A549 (cell line): ENCODE measurements at regions of chr12 and their contacts with region 1.

Region 1: DNA sequence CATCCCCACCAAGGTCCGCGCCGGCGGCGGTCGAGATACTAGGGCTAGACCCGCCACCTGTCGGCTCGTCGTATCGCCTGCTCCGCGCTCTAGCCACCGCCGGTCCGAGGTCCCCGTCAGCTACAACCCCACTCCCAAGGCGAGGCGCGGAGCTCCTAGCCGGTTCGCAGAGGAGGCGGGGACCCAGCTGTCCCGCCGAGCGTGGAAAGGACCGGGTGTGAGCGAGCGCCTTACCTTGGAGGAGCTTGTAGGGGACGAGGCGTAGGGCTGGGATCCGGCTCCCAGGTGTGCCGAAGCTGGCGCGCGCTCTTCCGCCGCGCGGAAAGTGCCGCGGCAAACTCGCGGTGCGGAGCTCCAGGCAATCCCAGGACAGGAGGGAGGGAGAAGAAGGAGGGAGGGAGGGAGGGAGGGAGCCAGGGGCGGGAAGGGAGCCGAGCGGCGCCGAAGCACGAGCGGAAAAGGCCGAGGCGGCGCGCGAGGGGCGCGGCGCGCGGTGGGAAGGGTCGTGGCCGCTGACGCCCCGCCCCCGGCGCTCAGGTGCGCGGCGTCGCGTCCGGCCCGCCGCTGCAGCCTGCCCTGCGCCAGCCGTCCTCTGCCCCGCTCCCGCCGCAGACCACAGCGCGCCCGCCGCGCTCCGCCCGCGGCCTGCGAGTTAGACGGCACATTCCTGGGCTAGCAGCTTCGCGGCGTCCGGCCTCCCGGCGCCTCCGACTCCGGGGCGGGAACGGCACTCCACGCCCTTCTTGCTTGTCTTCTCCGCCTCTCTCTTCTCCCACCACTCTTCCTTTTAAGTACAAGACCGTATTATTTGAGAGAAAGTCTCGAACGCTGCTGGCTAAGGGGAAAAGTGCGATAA is at the start of gene PAWR:
- DNase-seq: peak; percentile 59 to 89
- ATAC-seq: peak; percentile 68 to 76
- H3K4me3 ChIP-seq: peak within 1 kb of the TSS; percentile 88
- H3K27ac ChIP-seq: peak within 1 kb of the TSS; percentile 93 to 98
- H3K4me1 ChIP-seq: peaks cover 35% of the 10 kb centered on the region
- CTCF ChIP-seq: peak; percentile 34; the same call in 1 of the 3 replicates
- EP300 ChIP-seq: peak in 1 of 2 experiments; percentile 6; a peak in 1 of 5 replicates
- POLR2A ChIP-seq: peak; percentile 75
- RAD21 ChIP-seq: peak; percentile 47 to 64; a peak in 4 of 5 replicates
- polyA plus RNA-seq, gene PAWR: 34.0 and 55.2 TPM in 2 replicates

Region 2: DNA sequence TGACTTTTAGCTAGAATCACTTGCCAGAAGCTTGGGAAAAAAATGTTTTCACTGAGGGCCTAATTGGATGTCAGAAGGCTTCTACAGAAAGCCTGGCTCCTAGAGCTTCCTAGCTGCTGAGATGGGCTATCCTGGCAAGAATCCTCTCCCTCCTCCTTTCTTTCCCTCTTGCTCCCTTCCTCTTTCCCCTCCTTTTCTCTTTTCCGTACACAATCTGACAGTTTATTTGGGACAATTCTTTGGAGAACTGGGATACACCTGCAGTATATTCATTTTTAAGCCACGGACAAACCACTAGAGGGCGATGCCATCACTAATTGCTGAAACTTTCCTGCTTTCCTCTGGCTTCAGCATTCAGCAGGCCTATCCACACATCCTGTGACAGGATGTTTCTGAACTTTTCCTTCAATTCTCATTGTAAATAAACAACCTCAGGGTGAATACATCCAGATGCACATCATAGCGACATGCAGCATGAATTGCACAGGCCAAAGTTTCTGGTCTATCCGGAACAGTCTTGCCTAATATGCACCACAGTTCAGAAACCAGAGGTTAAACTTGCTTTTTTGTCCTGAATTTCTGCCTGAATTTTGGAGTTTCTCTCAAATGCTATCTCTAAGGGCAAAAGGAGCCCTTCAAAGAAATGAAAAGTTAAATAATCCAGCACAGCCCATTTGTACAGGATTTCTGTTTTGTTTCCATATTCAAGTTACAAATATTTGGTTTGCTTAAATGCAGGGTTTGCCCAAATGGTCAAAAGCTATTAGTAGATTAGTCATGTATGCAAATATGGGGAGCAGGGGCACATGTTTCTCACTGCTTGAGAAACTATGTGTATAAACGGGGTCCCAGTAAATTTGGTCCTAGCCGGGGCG is 142.9 kb before region 1 on chr12:
- CTCF ChIA-PET with region 1: interaction called, 6 read pairs
- POLR2A ChIA-PET with region 1: interaction called, 13 read pairs
- DNase-seq: peak; percentile 66 to 84
- ATAC-seq: peak; percentile 75; a peak in 5 of 6 replicates
- H3K4me3 ChIP-seq: 0 out of 3 replicates have a peak overlapping the region, but pooled peaks have one; percentile 10
- H3K27ac ChIP-seq: peak overlapping the region; percentile 83 to 88
- H3K4me1 ChIP-seq: peaks cover 56% of the 10 kb centered on the region
- CTCF ChIP-seq: peak; percentile 82
- EP300 ChIP-seq: no peak
- POLR2A ChIP-seq: no peak
- RAD21 ChIP-seq: peak; percentile 72 to 73

Region 3: DNA sequence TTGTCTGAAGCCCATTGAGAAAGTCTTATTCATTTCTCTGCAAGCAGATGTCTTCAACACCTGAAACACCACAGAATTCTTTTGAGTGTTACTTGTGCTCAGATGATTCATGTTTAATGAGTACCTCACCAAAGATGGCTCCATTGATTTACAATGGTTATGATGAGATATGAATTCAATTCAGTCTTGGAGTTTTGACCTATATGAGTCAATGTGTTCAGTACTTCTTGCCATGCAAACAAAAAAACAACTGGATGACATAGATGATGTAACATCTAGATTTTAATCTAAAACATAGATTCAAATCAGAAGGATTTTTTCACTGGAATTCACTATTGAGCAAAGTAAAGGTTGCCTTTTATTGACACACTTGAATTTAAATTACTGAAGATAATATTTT is 15.3 kb after region 1 on chr12:
- CTCF ChIA-PET with region 1: interaction called, 3 read pairs
- POLR2A ChIA-PET with region 1: interaction called, 16 read pairs
- DNase-seq: no peak
- ATAC-seq: no peak
- H3K4me3 ChIP-seq: no peak overlapping the region
- H3K27ac ChIP-seq: no peak overlapping the region
- H3K4me1 ChIP-seq: no peaks in the 10 kb centered on the region
- CTCF ChIP-seq: no peak
- EP300 ChIP-seq: no peak
- POLR2A ChIP-seq: no peak
- RAD21 ChIP-seq: no peak

Region 4: DNA sequence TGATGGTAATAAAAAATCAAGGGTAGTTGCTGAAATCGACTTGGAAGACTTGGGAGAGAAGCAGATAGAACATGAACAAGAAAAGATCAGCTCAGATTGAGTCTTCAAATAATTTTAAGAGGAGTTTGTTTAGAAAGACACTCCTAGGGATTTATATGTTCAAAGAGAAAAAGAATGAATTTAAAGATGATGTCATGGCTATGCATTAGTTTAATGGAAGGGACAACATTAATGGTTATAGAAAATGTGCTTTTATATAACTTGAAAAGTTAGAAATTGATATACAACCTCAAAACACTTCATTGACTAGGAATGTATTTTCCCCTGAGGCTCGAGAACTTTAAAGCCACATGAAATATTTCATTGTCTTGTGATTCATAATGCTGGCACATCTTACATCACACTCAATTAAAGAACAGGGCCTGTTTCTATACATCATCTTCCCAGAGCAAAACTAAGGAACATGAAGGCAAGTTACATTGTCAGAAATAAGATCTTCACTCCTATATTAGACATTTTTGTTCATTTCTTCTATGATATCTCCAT is 35.0 kb after region 1 on chr12:
- CTCF ChIA-PET with region 1: no interaction called
- POLR2A ChIA-PET with region 1: no interaction called
- DNase-seq: no peak
- ATAC-seq: no peak
- H3K4me3 ChIP-seq: no peak overlapping the region
- H3K27ac ChIP-seq: no peak overlapping the region
- H3K4me1 ChIP-seq: peaks cover 10% of the 10 kb centered on the region; the same call in 2 of the 3 replicates
- CTCF ChIP-seq: no peak
- EP300 ChIP-seq: no peak
- POLR2A ChIP-seq: no peak
- RAD21 ChIP-seq: no peak

Region 5: GRCh38 chr12:79737875-79738718 is 47.2 kb after region 1 on chr12:
- CTCF ChIA-PET with region 1: interaction called, 8 read pairs
- POLR2A ChIA-PET with region 1: interaction called, 11 read pairs
- DNase-seq: peak; percentile 52 to 79
- ATAC-seq: peak; percentile 76 to 91
- H3K4me3 ChIP-seq: no peak overlapping the region
- H3K27ac ChIP-seq: peak overlapping the region; percentile 12 to 48; a peak in 4 of 6 replicates
- H3K4me1 ChIP-seq: peaks cover 8% of the 10 kb centered on the region; the same call in 1 of the 3 replicates
- CTCF ChIP-seq: peak; percentile 88
- EP300 ChIP-seq: no peak
- POLR2A ChIP-seq: no peak
- RAD21 ChIP-seq: peak; percentile 89 to 90